Activated CD4-positive, alpha-beta T cell treated with anti-CD3 and anti-CD28 coated beads for 36 hours (primary cell): ENCODE measurements at regions of chr20 and their contacts with region 1.

Region 1: DNA sequence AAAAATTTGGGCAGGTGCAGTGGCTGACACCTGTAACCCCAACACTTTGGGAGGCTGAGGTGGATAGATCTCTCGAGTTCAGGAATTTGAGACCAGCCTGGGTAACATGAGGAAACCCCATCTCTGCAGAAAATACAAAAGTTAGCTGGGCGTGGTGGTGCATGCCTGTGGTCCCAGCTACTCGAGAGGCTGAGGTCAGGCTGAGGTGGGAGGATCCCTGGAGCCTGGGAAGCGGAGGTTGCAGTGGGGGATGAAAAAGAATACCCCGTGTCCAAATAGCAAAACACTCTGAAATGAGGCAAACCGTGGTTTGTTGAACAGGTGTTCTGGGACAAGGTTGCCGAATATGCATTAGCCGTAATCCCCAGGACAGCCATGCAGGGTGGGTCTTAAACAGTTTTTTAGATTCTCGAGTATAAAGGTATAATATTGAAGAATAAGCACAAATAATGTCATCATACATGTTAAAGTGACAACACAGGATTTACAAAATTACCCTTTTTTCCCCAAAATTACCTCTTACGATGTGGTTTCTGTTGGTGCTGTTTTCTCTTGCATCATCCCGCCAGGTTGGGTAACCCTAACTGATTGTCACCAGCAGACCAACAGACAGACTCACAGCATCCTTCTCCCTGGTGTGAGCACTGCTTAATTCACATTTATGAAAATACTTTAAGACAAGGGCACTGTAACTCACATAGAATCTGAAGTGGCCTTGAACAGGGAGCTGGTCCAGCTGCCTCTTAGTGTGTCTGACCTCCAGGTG is 9.1 kb downstream of the DNAJC5 start:
- DNase-seq: no peak
- ATAC-seq: no peak
- H3K4me3 Mint-ChIP-seq: no peak overlapping the region
- H3K27ac Mint-ChIP-seq: no peak overlapping the region
- H3K4me1 Mint-ChIP-seq: peaks cover 53% of the 10 kb centered on the region
- H3K27me3 Mint-ChIP-seq: no peaks in the 10 kb centered on the region

Region 2: DNA sequence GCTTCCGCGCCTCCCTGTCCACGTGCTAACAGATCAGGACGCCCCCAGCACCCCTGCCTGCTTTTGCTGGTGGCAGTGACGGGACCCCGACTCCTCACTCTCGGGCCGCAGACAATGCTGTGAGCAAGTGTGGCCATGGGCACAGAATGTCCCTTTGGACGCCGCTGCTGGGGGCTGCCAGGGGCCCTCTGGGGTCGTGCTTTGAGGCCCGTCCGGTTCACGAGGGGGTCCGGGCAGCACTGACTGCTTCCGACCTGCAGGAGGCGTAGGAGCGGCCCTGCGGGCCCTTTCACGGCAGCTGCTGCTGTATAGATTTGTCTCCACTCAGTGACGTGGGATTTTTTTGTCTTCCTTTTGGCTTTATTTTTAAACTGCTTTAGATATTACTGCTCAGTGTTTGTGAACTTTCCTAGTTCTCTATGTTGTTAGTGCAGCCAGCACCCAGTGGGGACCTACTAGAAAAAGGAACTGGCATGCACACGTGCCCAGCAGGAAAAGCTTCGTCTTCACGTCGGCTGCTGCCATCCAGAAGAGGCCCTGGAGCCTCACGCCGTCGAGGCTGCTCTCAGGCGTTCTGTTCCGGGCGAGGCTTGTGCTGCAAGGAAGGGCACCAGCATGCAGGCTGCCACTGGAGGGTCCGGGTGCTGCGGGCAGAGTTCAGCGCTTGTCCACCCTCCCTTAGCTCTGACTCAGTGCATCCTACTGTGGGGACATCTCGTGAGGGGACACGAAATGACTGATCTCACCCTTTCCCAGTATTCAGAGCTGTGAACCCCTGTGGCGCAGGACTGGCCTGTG is 30.5 kb after region 1 on chr20:
- CTCF ChIA-PET with region 1: interaction called, 5 read pairs
- POLR2A ChIA-PET with region 1: interaction called, 7 read pairs
- intact Hi-C with region 1: loop called in 1 of 2 experiments (anchors 5 kb)
- DNase-seq: peak; percentile 30
- ATAC-seq: no peak
- H3K4me3 Mint-ChIP-seq: no peak overlapping the region
- H3K27ac Mint-ChIP-seq: no peak overlapping the region
- H3K4me1 Mint-ChIP-seq: no peaks in the 10 kb centered on the region
- H3K27me3 Mint-ChIP-seq: no peaks in the 10 kb centered on the region